ENCODE measurements at regions of chr21 and their contacts with region 1.

Region 1: DNA sequence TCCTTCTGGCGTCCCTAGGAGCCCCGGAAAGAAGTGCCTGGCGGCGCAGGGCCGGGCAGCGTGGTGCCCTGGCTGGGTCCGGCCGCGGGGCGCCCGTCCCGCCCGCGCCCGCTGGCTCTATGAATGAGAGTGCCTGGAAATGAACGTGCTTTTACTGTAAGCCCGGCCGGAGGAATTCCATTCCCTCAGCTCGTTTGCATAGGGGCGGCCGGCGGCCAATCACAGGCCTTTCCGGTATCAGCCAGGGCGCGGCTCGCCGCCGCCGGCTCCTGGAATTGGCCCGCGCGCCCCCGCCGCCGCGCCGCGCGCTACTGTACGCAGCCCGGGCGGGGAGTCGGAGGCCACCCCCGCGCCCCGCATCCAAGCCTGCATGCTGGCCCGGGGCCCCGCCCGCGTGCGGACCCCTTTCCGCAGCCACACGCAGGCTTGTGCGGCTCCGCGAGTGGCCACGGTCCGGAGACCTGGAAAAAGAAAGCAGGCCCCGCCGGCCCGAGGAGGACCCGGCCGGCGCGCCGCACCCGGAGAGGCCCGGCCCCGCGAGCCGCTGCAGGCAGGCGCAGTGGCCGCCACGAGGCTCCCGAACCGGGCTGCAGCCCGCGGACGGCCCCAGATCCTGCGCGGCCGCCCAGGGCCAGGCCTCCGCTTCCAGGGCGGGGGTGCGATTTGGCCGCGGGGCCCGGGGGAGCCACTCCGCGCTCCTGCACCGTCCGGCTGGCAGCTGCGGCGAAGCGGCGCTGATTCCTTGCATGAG is 160.4 kb downstream of the RUNX1 start:
- DNase-seq: peak; percentile 93
- H3K4me3 ChIP-seq: peak overlapping the region; percentile 89 to 99 (median 94)
- H3K27ac ChIP-seq: peak overlapping the region; percentile 97
- H3K4me1 ChIP-seq: peaks cover 19% of the 10 kb centered on the region
- H3K27me3 ChIP-seq: no peaks in the 10 kb centered on the region
- CTCF ChIP-seq: no peak

Region 2: DNA sequence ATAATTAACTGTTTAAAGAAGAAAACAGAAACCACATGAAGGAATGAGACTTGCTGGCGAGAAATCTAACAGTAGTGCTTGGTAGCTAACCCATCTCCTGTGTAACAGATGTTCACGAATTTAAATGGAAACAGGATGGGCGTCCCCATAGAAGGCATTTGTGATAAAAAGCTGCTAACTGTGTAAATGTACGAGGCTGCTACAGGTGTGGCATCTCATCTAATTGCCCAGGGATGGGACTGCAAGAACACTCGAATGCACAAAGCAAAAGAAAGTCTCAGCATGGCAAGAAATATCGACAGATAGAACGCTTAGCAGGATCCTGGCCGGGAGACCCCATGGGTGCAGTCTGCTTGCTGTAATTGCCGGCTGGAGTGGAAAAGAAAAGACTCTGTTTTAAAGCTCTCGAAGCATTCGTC is 47.6 kb after region 1 on chr21:
- CTCF ChIA-PET with region 1: no interaction called
- dilution Hi-C with region 1: no loop called
- in situ Hi-C with region 1: no loop called
- intact Hi-C with region 1: no loop called
- DNase-seq: no peak
- H3K4me3 ChIP-seq: no peak overlapping the region
- H3K27ac ChIP-seq: peak overlapping the region; percentile 53
- H3K4me1 ChIP-seq: peaks cover 58% of the 10 kb centered on the region
- H3K27me3 ChIP-seq: no peaks in the 10 kb centered on the region
- CTCF ChIP-seq: no peak

Region 3: GRCh38 chr21:34983680-34984086 is 94.9 kb after region 1 on chr21:
- CTCF ChIA-PET with region 1: interaction called, 5 read pairs
- dilution Hi-C with region 1: no loop called
- in situ Hi-C with region 1: no loop called
- intact Hi-C with region 1: loop called (anchors 5 kb)
- DNase-seq: peak; percentile 73
- H3K4me3 ChIP-seq: no peak overlapping the region
- H3K27ac ChIP-seq: peak overlapping the region; percentile 72
- H3K4me1 ChIP-seq: peaks cover 33% of the 10 kb centered on the region
- H3K27me3 ChIP-seq: no peaks in the 10 kb centered on the region
- CTCF ChIP-seq: no peak

Region 4: DNA sequence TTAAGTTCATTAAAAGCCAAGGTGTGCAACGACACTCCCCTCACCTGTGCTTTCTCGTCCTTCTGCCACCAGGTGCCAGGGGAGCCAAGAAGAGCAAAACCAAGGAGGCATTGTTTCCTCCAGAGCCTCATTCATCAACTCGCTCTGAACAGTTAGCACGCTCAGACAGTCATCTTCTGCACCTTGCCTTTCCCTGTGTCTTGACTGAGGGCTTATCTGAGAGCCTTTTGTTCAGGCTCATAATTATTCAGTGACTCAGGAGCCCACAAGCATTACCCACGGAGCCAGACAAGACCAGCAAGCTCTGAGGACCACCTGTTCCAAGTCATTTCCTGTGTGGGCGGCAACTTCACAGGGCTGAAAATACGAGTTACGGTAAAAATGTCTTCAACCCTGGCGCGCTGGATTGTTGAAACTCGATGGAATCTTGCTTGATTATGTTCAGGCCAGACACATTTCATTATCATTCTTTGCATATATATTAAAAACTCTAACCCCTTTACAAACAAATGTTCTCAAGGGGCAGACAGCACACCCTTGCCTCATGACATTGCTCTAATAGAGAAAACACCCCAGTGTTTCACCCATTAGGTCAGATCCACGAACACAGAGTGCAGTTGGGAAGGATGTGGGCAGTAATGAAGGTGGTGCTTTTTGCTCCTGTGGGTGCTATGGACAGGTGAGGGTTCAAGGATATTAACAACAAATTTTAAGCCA is 250.1 kb after region 1 on chr21:
- CTCF ChIA-PET with region 1: interaction called, 3 read pairs
- dilution Hi-C with region 1: no loop called
- in situ Hi-C with region 1: no loop called
- intact Hi-C with region 1: loop called (anchors 1 kb)
- DNase-seq: peak; percentile 100
- H3K4me3 ChIP-seq: no peak overlapping the region
- H3K27ac ChIP-seq: peak overlapping the region; percentile 99
- H3K4me1 ChIP-seq: peaks cover 45% of the 10 kb centered on the region
- H3K27me3 ChIP-seq: no peaks in the 10 kb centered on the region
- CTCF ChIP-seq: peak; percentile 26 to 51

Region 5: GRCh38 chr21:35256467-35256988 is 367.8 kb after region 1 on chr21:
- CTCF ChIA-PET with region 1: no interaction called
- dilution Hi-C with region 1: no loop called
- in situ Hi-C with region 1: loop called in 1 of 2 experiments (anchors 25 kb)
- intact Hi-C with region 1: loop called (anchors 1 kb)
- DNase-seq: peak; percentile 99
- H3K4me3 ChIP-seq: peak overlapping the region; percentile 3 to 31 (median 7)
- H3K27ac ChIP-seq: peak overlapping the region; percentile 98
- H3K4me1 ChIP-seq: peaks cover 17% of the 10 kb centered on the region
- H3K27me3 ChIP-seq: no peaks in the 10 kb centered on the region
- CTCF ChIP-seq: peak in 1 of 2 donors; percentile 16

Region 6: DNA sequence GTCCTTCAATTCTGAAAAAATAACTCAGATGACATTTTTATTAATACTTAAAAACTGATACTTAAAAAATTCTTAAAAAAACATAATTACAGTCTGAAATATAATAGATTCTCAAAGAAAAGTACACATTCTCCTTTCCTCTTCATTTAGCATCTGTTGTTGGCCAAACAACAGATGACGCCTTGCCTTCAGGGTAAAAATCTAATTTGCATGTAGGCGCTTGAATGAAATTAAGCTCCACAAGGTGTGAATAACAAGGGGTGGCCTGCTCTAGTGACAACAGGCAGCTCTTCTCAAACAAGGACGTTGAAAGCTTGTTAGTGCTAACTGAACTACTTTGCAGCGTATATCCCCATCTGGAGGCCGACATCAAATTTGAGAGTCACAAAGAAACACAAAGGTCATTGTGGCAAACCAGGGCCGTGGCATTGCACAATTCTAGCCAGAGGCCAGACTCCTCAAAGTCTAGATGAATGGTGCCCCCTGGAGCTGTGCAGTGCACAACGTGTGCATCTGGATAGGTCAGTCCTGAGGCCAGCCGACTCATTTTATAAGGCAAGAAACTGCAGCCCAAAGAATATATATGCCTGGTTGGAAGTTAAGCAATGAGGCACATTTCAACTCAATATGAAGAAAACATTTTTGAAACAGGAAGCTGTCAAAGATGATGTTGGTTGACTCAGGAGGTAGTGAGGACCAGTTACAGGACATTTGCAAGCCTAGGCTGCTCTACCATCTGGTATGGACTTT is 619.6 kb after region 1 on chr21:
- CTCF ChIA-PET with region 1: no interaction called
- dilution Hi-C with region 1: no loop called
- in situ Hi-C with region 1: no loop called
- intact Hi-C with region 1: loop called (anchors 5 kb)
- DNase-seq: peak; percentile 56
- H3K4me3 ChIP-seq: no peak overlapping the region
- H3K27ac ChIP-seq: no peak overlapping the region
- H3K4me1 ChIP-seq: peaks cover 22% of the 10 kb centered on the region
- H3K27me3 ChIP-seq: no peaks in the 10 kb centered on the region
- CTCF ChIP-seq: peak in 1 of 2 donors; percentile 6

Region 7: DNA sequence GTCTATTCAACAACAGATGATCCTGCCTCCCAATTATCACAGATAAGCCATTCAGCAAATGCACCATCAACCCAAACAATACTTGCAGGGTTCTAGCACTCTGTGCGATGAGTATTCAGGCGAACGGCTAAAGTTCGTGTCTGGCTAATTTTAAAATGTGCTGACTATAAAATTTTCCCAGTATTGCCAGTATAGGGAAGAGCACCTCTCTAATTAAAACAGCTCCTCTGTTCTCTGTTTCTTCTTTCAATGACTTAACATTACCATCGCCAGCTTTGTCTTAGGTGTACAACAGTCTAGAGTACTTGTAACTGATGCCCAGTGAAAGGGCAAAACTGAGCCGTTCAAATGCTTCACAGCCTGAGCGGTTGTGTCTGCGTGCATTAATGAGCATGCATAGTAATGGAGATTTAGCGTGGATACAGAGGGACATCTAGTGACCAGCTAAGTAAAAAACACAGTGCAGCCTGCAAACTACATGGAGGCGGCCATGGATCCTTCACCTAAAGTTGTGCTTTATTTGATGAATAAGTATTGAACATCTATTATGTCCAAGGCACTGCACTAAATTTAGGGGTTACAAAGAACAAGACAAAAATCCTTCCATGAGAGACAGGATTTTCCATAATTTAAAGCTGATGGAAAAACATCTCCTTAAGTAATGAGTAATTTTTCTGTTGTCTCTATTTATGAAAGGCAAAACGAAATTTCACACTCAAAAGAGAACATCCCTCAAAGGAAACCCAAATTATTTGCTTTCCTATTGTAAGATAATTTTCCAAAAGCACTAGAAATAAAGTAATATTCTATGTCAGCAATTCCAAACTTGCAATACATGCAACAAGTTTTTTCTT is 1051.6 kb after region 1 on chr21:
- CTCF ChIA-PET with region 1: no interaction called
- dilution Hi-C with region 1: no loop called
- in situ Hi-C with region 1: loop called in 1 of 2 experiments (anchors 10 kb)
- intact Hi-C with region 1: loop called (anchors 1 kb)
- DNase-seq: peak; percentile 66
- H3K4me3 ChIP-seq: no peak overlapping the region
- H3K27ac ChIP-seq: no peak overlapping the region
- H3K4me1 ChIP-seq: no peaks in the 10 kb centered on the region
- H3K27me3 ChIP-seq: no peaks in the 10 kb centered on the region
- CTCF ChIP-seq: peak; percentile 77